A549 (cell line): ENCODE measurements at regions of chr1 and their contacts with region 1.

Region 1: GRCh38 chr1:50750021-50750619 is 209.9 kb downstream of the FAF1 start:
- DNase-seq: peak; percentile 35 to 53
- ATAC-seq: peak; percentile 64 to 83; a peak in 4 of 6 replicates
- H3K4me3 ChIP-seq: no peak overlapping the region
- H3K27ac ChIP-seq: no peak overlapping the region
- H3K4me1 ChIP-seq: no peaks in the 10 kb centered on the region
- CTCF ChIP-seq: peak; percentile 60
- EP300 ChIP-seq: no peak
- POLR2A ChIP-seq: no peak
- RAD21 ChIP-seq: peak; percentile 50 to 51

Region 2: GRCh38 chr1:50684185-50684584 is 65.9 kb before region 1 on chr1:
- CTCF ChIA-PET with region 1: no interaction called
- POLR2A ChIA-PET with region 1: no interaction called
- DNase-seq: no peak
- ATAC-seq: no peak
- H3K4me3 ChIP-seq: no peak overlapping the region
- H3K27ac ChIP-seq: no peak overlapping the region
- H3K4me1 ChIP-seq: no peaks in the 10 kb centered on the region
- CTCF ChIP-seq: no peak
- EP300 ChIP-seq: no peak
- POLR2A ChIP-seq: no peak
- RAD21 ChIP-seq: no peak

Region 3: DNA sequence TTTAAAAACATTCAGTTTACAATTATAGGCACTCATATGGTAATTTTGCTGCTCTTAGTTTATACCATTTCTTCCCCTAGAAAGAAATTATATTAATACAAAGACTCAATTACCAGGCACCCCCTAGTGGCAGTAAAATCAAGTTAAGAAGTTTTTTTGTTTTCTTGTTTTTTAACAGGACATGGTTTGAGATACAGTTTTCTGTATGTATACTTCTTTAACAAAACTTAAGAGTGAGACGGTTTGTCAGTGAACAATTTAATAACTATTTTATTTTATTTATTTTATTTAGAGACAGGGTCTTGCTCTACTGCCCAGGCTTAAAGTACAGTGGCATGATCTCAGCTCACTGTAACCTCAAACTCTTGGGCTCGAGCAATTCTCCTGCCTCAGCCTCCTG is 14.7 kb before region 1 on chr1:
- CTCF ChIA-PET with region 1: interaction called, 10 read pairs
- POLR2A ChIA-PET with region 1: no interaction called
- DNase-seq: peak; percentile 13 to 18
- ATAC-seq: no peak
- H3K4me3 ChIP-seq: no peak overlapping the region
- H3K27ac ChIP-seq: no peak overlapping the region
- H3K4me1 ChIP-seq: no peaks in the 10 kb centered on the region
- CTCF ChIP-seq: peak; percentile 44
- EP300 ChIP-seq: no peak
- POLR2A ChIP-seq: no peak
- RAD21 ChIP-seq: peak in 1 of 2 experiments; percentile 34; a peak in 1 of 5 replicates